ENCODE measurements at regions of chr16 and their contacts with region 1.

Region 1: GRCh38 chr16:48156790-48157209 is 1.0 kb upstream of the ABCC12 start:
- DNase-seq: peak; percentile 92
- ATAC-seq: peak; percentile 87

Region 2: DNA sequence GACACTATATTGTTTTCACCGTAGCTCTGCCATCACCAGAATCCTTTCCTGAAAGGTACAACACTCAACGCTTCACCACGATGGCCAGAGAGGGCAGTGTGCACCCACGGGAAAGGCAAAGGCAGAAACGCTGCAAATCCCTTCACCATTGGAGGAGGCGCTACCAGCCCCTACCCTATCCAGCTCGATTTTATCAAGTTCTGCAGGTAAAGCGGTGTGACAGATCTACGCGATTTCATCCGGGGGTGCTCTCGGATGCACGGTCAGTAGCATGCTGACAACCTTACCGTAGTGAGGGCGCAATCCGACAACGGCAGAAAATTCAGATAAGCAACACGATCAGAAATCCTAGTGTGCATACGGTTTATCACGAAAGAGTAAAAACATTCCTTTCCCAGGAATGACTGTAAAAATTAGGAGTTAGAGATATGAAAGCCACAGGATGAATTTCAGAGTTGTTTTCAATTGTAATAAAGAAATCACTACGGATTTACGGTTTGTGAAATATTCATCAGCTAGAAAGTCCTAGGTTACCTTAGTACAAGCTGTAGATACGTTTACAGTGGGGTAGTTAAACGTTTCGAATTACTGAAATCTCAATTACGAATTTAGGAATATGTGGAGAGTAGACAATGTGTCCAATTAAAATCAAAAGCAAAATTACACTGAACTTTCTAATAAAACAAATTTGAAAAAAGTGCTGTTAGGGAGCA is 1014.9 kb before region 1 on chr16:
- intact Hi-C with region 1: loop called (anchors 5 kb)
- DNase-seq: peak; percentile 86
- ATAC-seq: peak; percentile 93